ENCODE measurements at regions of chr16 and their contacts with region 1.

Region 1: GRCh38 chr16:17467923-17468540 is 2.7 kb downstream of the XYLT1 start:
- DNase-seq: peak; percentile 37 to 90 (median 82)
- H3K4me3 ChIP-seq: peak overlapping the region; percentile 13 to 86 (median 74)
- H3K27ac ChIP-seq: peak overlapping the region in 35 of 59 donors; percentile 2 to 89 (median 51)
- H3K27me3 ChIP-seq: peaks cover 0 to 19% (median 0%) of the 10 kb centered on the region in 45 donors
- CTCF ChIP-seq: peak; percentile 40 to 86 (median 75)

Region 2: GRCh38 chr16:17076092-17076754 is 391.8 kb before region 1 on chr16:
- intact Hi-C with region 1: loop called in 1 of 2 experiments (anchors 5 kb)
- DNase-seq: no peak
- H3K4me3 ChIP-seq: peak overlapping the region in 6 of 59 donors; percentile 2 to 33 (median 8)
- H3K27ac ChIP-seq: peak overlapping the region in 50 of 59 donors; percentile 11 to 92 (median 66)
- H3K27me3 ChIP-seq: no peaks in the 10 kb centered on the region
- CTCF ChIP-seq: peak in 4 of 56 donors; percentile 7 to 31 (median 14)

Region 3: GRCh38 chr16:17277977-17278381 is 190.1 kb before region 1 on chr16:
- intact Hi-C with region 1: loop called in 1 of 2 experiments (anchors 2 kb)
- DNase-seq: peak in 6 of 10 donors; percentile 9 to 65 (median 55)
- H3K4me3 ChIP-seq: no peak overlapping the region
- H3K27ac ChIP-seq: no peak overlapping the region
- H3K27me3 ChIP-seq: peaks cover 0 to 4% (median 0%) of the 10 kb centered on the region in 45 donors
- CTCF ChIP-seq: peak in 53 of 56 donors; percentile 13 to 71 (median 51)

Region 4: GRCh38 chr16:17404941-17405689 is 62.9 kb before region 1 on chr16:
- intact Hi-C with region 1: loop called in 1 of 2 experiments (anchors 2 kb)
- DNase-seq: peak; percentile 36 to 97 (median 92)
- H3K4me3 ChIP-seq: peak overlapping the region in 33 of 59 donors; percentile 0 to 56 (median 25)
- H3K27ac ChIP-seq: peak overlapping the region; percentile 81 to 98 (median 94)
- H3K27me3 ChIP-seq: no peaks in the 10 kb centered on the region
- CTCF ChIP-seq: peak in 11 of 56 donors; percentile 9 to 41 (median 20)

Region 5: DNA sequence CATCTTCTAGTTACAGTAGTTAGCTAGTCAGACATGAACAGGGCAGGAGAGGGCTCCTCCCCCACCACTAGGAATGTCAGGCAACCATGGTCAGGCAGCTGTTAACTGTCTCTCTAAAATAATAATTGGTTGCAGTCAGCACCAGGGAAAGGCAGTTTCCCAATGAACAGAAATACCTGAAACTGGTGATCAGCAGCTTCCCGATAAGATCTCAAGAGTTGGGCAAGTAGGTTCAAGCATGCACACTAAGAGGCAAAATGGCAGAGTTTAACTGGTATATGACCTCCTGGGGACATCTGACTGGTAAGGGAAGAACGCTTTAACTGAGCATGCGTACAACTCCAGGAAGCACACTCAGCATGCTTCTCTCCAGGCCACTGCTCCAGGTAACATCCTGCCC is 15.3 kb after region 1 on chr16:
- intact Hi-C with region 1: loop called in 1 of 2 experiments (anchors 1 kb)
- DNase-seq: no peak
- H3K4me3 ChIP-seq: no peak overlapping the region
- H3K27ac ChIP-seq: no peak overlapping the region
- H3K27me3 ChIP-seq: peaks cover 0 to 23% (median 0%) of the 10 kb centered on the region in 45 donors
- CTCF ChIP-seq: no peak

Region 6: DNA sequence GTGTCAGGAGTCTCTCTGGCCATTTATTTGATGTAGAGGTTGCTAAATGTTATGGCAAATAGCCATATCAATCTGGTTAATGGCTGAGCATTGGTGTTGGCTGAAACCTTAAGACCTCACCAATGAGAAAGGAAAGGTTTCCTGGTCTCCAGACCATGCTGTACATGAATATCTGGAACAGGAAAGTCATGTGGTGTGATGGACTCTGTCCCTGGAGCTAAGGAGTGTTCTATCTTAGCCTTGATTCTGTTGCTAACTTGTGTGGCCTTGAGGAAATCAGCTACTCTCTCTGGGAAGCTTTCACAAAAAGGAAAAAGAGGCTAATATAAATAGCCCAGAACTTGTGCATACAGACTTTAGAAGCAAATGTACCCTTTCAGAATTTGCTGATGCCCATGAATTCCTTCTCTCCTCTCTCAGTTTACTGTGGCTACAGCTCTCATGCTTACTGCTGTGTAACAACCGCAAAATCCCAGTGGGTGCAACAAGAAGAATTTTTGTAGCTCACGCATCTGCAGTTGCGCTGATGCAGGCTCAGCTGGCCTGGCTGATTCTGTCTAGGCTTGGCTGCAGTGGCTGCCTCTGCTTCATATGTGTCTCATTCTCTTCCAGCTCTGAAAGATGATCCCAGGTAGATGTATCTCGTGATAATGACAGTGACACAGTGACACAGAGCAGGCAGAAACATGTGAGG is 581.0 kb after region 1 on chr16:
- intact Hi-C with region 1: no loop called
- DNase-seq: no peak
- H3K4me3 ChIP-seq: no peak overlapping the region
- H3K27ac ChIP-seq: peak overlapping the region in 16 of 59 donors; percentile 2 to 59 (median 22)
- H3K27me3 ChIP-seq: peaks cover 0 to 7% (median 0%) of the 10 kb centered on the region in 45 donors
- CTCF ChIP-seq: no peak

Measured in dorsolateral prefrontal cortex (tissue), 120 donors.